OCI-LY7 (cell line): ENCODE measurements at regions of chr4 and their contacts with region 1.

Region 1: DNA sequence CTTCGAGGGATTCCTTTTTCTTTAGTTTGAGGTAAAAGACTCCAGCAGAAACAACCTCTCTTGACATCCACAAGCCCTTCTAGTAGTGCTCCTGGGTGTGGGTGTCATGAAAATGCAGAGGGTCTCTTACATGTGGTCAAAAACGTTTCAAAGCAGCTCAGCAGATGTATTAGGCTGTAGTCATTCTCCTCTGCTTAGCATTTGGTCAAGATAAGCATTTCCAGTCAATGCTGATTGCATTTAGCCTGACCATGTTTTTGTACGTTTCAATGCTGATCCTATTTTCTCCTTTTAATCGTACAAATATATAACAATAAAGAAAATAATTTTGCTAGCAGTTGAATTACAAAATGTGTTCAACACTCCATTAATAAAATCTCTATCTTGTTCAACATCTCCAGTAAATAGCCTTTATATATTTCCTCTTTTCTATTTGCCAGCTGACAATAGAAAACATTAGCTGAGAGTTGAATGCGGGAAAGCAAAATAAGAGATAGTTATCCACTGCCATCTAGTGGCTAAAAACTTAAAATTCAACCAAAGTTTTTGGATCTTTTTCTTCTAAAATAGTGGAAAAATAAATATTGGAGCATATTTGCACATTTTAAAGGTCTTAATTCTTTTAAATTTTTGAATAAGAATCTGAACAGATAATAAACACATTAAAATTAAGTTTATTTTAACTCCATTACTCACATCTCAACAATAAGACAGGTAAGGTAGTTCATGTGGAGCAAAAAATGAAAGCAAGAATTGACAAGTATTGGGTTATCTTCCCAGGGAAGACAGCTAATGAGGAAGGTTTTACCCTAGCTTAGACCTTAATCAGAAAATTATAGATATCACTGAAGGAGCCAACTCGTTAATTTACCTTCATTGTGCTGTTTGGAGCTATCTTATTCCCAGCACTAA is 15.2 kb upstream of the PACRGL start:
- DNase-seq: peak; percentile 48
- H3K4me3 ChIP-seq: no peak overlapping the region
- H3K27ac ChIP-seq: no peak overlapping the region
- H3K4me1 ChIP-seq: no peaks in the 10 kb centered on the region
- CTCF ChIP-seq: peak; percentile 90

Region 2: DNA sequence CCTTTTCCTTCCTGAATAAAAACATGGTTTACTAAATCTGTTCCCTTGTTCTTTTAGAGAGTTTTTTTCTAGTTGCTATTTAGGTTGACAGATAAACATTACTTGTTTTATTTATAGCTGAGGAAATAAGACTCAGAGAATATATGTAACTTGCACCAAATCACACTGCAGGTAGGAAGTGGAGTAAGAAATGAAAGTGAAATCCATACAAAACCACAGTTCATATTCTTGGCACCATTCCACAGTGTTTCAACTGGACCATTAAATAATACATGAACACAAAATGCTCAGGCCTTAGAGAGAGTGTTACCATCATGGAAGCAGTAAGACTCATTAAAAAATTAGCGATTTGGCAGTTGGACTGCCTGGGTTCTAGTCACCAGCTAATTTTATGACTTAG is 760.3 kb before region 1 on chr4:
- CTCF ChIA-PET with region 1: no interaction called
- POLR2A ChIA-PET with region 1: no interaction called
- intact Hi-C with region 1: no loop called
- DNase-seq: no peak
- H3K4me3 ChIP-seq: no peak overlapping the region
- H3K27ac ChIP-seq: no peak overlapping the region
- H3K4me1 ChIP-seq: no peaks in the 10 kb centered on the region
- CTCF ChIP-seq: no peak

Region 3: DNA sequence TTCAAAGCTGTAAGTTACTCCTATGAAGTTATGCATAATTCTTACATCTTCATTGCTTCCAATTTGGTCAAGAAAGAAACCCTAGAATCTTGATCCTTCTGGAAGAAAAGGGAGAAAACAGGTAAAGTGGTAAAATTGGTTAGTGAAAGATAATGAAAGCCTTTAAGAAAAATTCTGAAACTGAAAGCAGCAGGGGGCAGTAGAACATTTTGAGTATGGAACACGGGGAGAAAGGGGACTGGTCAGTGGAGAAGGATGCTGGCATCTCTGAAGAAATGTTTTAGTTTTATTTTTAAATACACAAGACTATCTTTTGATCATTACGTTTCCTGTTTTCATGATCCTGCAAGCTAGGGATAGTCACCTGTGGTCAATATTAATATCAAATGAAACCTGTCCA is 379.1 kb before region 1 on chr4:
- CTCF ChIA-PET with region 1: no interaction called
- POLR2A ChIA-PET with region 1: no interaction called
- intact Hi-C with region 1: loop called (anchors 10 kb)
- DNase-seq: no peak
- H3K4me3 ChIP-seq: no peak overlapping the region
- H3K27ac ChIP-seq: no peak overlapping the region
- H3K4me1 ChIP-seq: no peaks in the 10 kb centered on the region
- CTCF ChIP-seq: peak; percentile 44; the same call in 1 of the 2 replicates

Region 4: GRCh38 chr4:20418861-20419451 is 266.2 kb before region 1 on chr4:
- CTCF ChIA-PET with region 1: no interaction called
- POLR2A ChIA-PET with region 1: no interaction called
- intact Hi-C with region 1: loop called (anchors 2 kb)
- DNase-seq: peak; percentile 67
- H3K4me3 ChIP-seq: peak overlapping the region; percentile 30
- H3K27ac ChIP-seq: no peak overlapping the region
- H3K4me1 ChIP-seq: peaks cover 6% of the 10 kb centered on the region
- CTCF ChIP-seq: peak; percentile 85

Region 5: GRCh38 chr4:20544645-20545044 is 140.5 kb before region 1 on chr4:
- CTCF ChIA-PET with region 1: no interaction called
- POLR2A ChIA-PET with region 1: no interaction called
- intact Hi-C with region 1: loop called (anchors 10 kb)
- DNase-seq: peak; percentile 17
- H3K4me3 ChIP-seq: no peak overlapping the region
- H3K27ac ChIP-seq: no peak overlapping the region
- H3K4me1 ChIP-seq: no peaks in the 10 kb centered on the region
- CTCF ChIP-seq: peak; percentile 72